ENCODE measurements at regions of chr7 and their contacts with region 1.

Region 1: DNA sequence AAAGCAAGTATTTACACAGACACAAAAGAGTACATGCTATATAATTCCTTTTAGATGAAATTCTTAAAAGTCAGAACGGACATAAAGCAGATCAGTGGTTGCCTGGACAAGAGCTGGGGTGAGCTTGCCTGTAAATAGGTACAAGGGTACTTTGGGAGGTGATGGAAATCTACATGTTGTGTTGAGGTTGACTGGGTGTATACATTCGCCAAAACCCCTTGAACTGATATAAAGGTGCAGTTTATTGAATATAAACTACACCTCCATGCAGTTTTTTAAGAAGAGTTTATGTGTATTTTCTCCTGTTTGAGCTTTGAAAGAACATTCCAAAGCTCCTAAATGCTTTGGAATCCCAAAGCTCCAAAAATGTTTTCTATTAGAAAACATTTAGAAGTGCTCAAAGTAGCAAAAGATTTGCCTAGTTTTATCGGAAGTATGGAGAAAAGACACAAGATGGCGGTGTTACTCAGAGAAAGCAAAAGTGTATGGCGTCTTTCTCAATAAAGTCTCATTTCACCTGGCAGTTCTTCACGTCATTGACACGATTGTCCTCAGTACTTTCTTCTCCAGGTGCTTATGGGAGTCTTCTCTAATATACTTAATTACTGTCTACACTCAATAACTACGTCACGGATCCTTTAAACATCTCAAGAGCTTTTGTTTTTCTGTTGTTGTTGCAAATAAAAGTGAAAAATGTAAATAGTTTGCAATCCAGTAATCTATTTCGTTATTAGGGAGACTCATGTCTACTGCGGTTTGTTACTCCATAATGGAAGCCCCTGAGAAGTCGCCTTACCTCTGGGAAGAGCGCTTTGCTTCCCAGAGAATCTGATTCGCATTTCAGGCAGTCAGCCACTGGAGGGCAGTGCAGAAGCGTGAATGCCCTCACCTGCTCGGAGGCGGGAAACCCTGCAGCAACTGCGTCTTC is 14.7 kb upstream of the SEC61G start:
- DNase-seq: peak; percentile 62 to 85 (median 66)
- ATAC-seq: peak; percentile 96
- H3K4me3 ChIP-seq: 0 out of 2 replicates have a peak overlapping the region, but pooled peaks have one; percentile 2
- H3K27ac ChIP-seq: no peak overlapping the region
- H3K4me1 ChIP-seq: no peaks in the 10 kb centered on the region; a peak in 1 of 5 replicates
- H3K27me3 ChIP-seq: peaks cover 2 to 14% of the 10 kb centered on the region in 2 experiments; a peak in 4 of 5 replicates
- CTCF ChIP-seq: peak; percentile 80 to 92 (median 89)
- EP300 ChIP-seq: no peak
- POLR2A ChIP-seq: no peak
- RAD21 ChIP-seq: peak; percentile 78 to 85

Region 2: DNA sequence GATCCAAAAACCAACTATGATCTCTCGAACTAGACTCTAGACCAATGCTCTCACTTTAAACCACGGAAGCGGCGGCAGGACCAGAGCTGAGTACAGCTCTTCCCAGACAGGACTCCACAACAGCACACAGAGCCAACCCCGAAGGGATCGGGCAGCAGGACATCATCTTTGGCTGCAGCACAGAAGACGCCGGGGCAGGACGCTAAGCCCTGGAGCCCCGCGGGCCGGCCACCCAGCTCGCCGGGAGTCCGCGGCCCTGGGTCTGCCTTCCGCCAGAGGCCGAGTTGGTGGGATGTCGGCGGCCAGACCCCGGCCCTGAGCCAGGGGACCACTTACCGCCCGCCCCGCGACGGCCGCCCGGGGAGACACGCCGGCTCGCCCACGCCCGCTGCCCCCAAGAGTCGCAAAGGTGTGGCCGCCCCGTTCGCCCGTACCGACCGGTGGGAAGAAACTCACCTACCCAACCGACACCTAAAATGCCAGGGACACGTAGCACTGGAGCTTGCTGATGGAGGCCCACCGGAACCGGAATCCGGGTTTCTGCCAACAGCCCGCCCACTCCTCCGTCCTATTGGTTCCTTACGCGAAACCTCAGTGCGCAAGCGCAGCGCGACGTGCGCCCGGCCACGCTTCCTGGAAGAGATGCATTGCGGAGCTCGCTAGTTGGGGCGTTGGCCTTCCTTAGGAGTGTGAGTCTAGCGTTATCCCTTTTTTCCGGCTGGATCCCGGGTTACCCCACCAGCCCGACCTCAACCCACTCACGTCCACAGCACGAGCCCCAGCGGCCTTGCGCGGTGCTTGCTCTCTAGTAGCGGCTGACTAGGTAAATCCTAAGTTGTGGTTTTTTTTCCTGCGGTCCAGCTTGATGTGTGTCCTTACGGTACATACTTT is 14.8 kb before region 1 on chr7 and contains the start of gene SEC61G:
- CTCF ChIA-PET with region 1: no interaction called
- POLR2A ChIA-PET with region 1: interaction called, 10 read pairs
- in situ Hi-C with region 1: no loop called
- intact Hi-C with region 1: no loop called
- DNase-seq: peak; percentile 89 to 97 (median 92)
- ATAC-seq: peak; percentile 94
- H3K4me3 ChIP-seq: peak within 1 kb of the TSS; percentile 91
- H3K27ac ChIP-seq: peak within 1 kb of the TSS; percentile 81
- H3K4me1 ChIP-seq: peaks cover 3 to 9% of the 10 kb centered on the region in 2 experiments; a peak in 4 of 5 replicates
- H3K27me3 ChIP-seq: peaks cover 0 to 2% of the 10 kb centered on the region in 2 experiments; a peak in 1 of 5 replicates
- CTCF ChIP-seq: no peak
- EP300 ChIP-seq: no peak
- POLR2A ChIP-seq: peak; percentile 97
- RAD21 ChIP-seq: no peak
- polyA plus RNA-seq, gene SEC61G: 442 to 565 TPM

Region 3: DNA sequence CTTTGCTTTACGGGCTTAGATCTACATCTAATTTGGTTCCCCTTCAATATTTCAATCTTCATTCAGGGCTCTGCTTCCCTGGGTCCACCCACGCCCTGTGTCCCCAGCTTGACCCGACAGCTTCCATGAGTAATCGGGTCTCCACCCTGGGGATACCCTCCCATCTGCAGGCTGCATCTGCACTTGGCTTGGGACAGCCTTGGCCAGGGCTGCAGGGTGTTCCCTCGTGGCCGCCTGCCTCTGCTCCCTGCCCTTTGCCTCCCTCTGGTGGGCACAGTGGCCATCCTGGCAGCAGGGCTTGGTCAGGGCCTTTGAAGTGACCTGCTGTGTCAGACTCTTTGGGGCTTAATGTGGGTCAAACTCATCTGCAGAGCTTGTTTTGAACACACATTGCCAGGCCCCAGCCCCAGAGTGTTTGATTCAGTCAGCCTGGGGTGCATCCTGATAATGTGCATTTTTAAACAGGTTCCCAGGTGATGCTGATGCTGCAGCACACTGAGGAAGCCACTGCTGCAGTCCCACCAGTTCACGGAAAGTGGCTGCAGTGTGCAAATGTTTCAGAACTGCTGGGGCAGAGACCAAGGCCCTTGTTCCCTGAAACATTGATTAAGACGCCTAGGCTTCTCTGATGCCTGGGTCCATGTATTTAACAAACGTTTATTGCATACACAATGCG is 65.9 kb after region 1 on chr7:
- CTCF ChIA-PET with region 1: interaction called, 3 read pairs
- POLR2A ChIA-PET with region 1: no interaction called
- in situ Hi-C with region 1: no loop called
- intact Hi-C with region 1: loop called (anchors 1 kb)
- DNase-seq: peak in 2 of 4 experiments; percentile 11 to 13
- ATAC-seq: peak; percentile 60
- H3K4me3 ChIP-seq: no peak overlapping the region
- H3K27ac ChIP-seq: no peak overlapping the region
- H3K4me1 ChIP-seq: peaks cover 0 to 5% of the 10 kb centered on the region in 2 experiments; a peak in 2 of 5 replicates
- H3K27me3 ChIP-seq: peaks cover 0 to 25% of the 10 kb centered on the region in 2 experiments; a peak in 2 of 5 replicates
- CTCF ChIP-seq: peak in 2 of 3 experiments; percentile 27 to 42; a peak in 4 of 6 replicates
- EP300 ChIP-seq: no peak
- POLR2A ChIP-seq: no peak
- RAD21 ChIP-seq: peak in 1 of 2 experiments; percentile 21; a peak in 1 of 4 replicates

Region 4: DNA sequence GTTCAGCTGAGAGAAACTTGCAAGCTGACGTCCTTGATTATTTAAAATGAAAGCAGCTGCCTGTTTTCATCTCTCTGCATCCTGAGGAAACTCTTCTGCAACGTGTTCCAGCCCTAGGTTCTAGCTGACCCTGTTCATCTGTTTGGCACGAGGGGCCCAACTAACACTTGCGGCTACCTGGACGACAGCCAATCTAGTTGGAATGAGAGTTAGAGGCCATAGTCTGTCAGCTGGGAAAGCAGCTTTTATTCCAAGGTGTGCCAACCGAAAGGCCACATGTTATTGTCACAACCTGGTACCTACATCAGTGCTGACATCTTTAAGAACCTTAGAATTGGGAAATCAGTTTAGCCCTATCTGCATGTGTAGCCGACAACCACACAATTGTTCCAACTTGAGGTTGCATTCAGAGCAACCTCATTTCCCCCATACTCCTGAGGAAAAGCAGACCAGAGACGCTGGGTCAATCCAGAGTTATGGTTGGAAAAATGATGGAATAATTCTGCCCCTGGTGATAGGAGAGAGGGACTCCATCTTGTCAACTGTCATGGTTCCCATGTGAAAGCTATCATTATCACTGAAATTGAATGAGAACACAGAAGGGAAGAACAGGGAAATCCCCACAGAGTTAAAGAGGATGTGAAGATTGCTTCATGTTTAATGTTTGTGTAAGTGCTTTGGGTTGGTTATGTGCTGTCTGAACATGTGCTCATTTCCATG is 366.6 kb after region 1 on chr7:
- CTCF ChIA-PET with region 1: no interaction called
- POLR2A ChIA-PET with region 1: no interaction called
- in situ Hi-C with region 1: no loop called
- intact Hi-C with region 1: loop called (anchors 10 kb)
- DNase-seq: no peak
- ATAC-seq: no peak
- H3K4me3 ChIP-seq: no peak overlapping the region
- H3K27ac ChIP-seq: no peak overlapping the region
- H3K4me1 ChIP-seq: peaks cover 0 to 5% of the 10 kb centered on the region in 2 experiments; a peak in 1 of 5 replicates
- H3K27me3 ChIP-seq: peaks cover 0 to 22% of the 10 kb centered on the region in 2 experiments; a peak in 4 of 5 replicates
- CTCF ChIP-seq: no peak
- EP300 ChIP-seq: no peak
- POLR2A ChIP-seq: no peak
- RAD21 ChIP-seq: no peak

Region 5: GRCh38 chr7:55415173-55415778 is 641.5 kb after region 1 on chr7:
- CTCF ChIA-PET with region 1: no interaction called
- POLR2A ChIA-PET with region 1: no interaction called
- in situ Hi-C with region 1: no loop called
- intact Hi-C with region 1: loop called (anchors 10 kb)
- DNase-seq: peak; percentile 69 to 79 (median 72)
- ATAC-seq: peak; percentile 93
- H3K4me3 ChIP-seq: no peak overlapping the region
- H3K27ac ChIP-seq: no peak overlapping the region
- H3K4me1 ChIP-seq: 0 out of 5 replicates have a peak, but pooled peaks cover 0 to under 1% of the 10 kb centered on the region in 2 experiments
- H3K27me3 ChIP-seq: no peaks in the 10 kb centered on the region
- CTCF ChIP-seq: peak; percentile 73 to 78 (median 77)
- EP300 ChIP-seq: no peak
- POLR2A ChIP-seq: no peak
- RAD21 ChIP-seq: peak; percentile 73 to 75

Measured in K562 (cell line).